HEK293T (cell line): ENCODE measurements at regions of chr7 and their contacts with region 1.

Region 1: DNA sequence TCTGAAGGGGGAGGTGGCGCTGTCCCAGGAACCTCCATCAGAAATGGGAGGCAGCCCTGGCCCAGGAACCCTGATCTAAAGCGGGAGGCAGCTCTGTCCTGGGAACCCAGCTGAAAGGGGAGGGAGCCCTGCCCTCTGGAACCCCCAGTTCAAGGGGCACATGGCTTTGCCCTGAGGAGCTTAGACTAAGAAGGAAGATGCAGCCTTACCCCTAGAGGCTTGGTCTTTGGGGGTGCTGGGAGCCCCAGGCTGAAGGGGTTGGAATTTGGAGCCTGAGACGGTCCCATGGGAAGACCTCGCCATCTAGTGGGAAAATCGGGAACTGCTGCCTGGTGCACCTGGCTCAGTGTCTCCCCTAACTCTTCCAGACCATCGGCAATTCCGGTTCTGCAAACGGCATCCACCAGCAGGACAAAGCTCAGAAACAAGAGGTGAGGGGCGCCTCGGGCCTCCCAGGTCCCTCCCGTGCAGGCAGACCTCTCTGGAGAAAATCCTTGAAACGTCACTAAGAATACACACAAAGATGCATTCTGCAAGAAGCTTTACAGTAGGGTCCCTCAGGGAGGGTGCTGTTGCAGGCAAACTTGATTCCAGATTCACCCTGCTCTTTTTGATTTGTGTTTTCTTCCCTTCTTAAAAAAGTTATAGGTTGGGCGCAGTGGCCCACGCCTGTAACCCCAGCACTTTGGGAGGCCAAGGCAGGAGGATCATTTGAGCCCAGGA is 52.4 kb upstream of the GTF2IRD1 start:
- DNase-seq: peak; percentile 82

Region 2: DNA sequence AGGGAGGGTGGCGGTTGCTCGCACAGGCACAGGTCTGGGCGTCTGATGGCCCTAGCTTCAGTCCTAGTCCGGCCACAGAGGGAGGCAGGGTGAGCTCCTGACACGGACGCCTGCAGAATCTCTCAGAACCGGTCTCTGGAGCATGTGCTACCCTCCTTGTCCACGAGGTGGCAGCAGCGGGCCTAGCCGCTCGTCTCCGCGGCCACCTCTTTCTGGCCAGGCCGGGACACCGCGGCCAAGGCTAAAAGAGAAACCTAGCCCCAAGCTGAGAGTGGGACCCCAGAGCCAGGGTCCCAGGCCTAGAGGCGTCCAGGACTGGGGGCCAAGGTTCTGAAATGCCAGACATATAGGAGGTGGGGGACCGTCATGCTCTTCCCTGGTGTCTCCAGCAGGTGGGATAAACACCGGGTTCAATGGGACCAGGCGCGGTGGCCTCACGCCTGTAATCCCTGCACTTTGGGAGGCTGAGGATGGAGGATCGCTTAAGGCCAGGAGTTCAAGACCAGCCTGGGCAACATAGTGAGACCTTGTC is 194.6 kb before region 1 on chr7:
- CTCF ChIA-PET with region 1: interaction called, 83 read pairs
- POLR2A ChIA-PET with region 1: interaction called, 8 read pairs
- DNase-seq: peak; percentile 85

Region 3: GRCh38 chr7:74212656-74213055 is 188.6 kb before region 1 on chr7:
- CTCF ChIA-PET with region 1: interaction called, 83 read pairs
- POLR2A ChIA-PET with region 1: no interaction called
- DNase-seq: no peak

Region 4: GRCh38 chr7:74275401-74275881 is 125.9 kb before region 1 on chr7:
- CTCF ChIA-PET with region 1: interaction called, 16 read pairs
- POLR2A ChIA-PET with region 1: no interaction called
- DNase-seq: peak; percentile 70

Region 5: GRCh38 chr7:74502181-74502891 is 101.0 kb after region 1 on chr7:
- CTCF ChIA-PET with region 1: no interaction called
- POLR2A ChIA-PET with region 1: no interaction called
- DNase-seq: no peak